ENCODE measurements at regions of chr3 and their contacts with region 1.

Region 1: DNA sequence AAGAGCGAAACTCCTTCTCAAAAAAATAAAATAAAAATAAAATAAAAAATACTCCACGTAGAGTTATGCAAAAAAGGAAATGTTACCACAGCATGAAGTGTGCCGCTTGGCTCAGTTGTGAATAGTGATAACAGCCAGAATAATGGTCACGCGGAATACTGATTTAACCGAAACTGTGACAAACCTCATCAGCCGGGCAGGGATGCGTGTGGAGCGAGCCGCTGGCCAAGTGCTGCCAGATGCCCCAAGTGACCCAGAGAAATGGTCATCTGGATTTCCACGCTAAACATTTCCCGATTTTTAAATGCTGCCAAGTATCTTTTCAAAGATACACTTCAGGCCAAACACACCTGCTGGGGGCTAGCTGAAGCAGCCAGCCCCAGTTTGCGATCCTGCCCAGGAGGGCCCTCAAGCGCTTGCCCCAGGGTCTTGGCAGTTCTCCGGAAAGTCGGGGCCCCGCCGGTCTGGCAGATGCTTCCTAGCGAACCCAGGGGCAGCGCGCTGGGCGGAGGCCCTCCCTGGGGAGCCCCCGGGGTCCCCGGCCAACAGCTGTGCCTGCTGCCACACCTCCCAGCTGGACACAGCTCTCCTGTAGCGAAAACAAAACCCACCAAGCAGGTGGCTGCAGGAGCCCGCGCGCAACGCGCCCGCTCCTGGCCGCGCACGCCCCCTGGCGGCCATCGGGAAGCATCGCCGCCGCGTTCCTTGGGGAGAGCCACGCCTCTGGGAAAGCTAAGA is 35.1 kb downstream of the CMTM6 start:
- DNase-seq: peak; percentile 79
- H3K4me3 Mint-ChIP-seq: no peak overlapping the region
- H3K27ac Mint-ChIP-seq: no peak overlapping the region
- H3K4me1 Mint-ChIP-seq: peaks cover 25% of the 10 kb centered on the region
- H3K27me3 Mint-ChIP-seq: no peaks in the 10 kb centered on the region
- CTCF ChIP-seq: peak; percentile 96

Region 2: GRCh38 chr3:32296256-32297204 is 171.0 kb before region 1 on chr3:
- CTCF ChIA-PET with region 1: interaction called, 17 read pairs
- POLR2A ChIA-PET with region 1: no interaction called
- intact Hi-C with region 1: loop called (anchors 2 kb)
- DNase-seq: peak; percentile 70
- H3K4me3 Mint-ChIP-seq: no peak overlapping the region
- H3K27ac Mint-ChIP-seq: no peak overlapping the region
- H3K4me1 Mint-ChIP-seq: peaks cover 9% of the 10 kb centered on the region
- H3K27me3 Mint-ChIP-seq: no peaks in the 10 kb centered on the region
- CTCF ChIP-seq: peak; percentile 91

Region 3: GRCh38 chr3:32391643-32392535 is 75.6 kb before region 1 on chr3 and contains the start of gene CMTM7:
- CTCF ChIA-PET with region 1: interaction called, 17 read pairs
- POLR2A ChIA-PET with region 1: interaction called, 4 read pairs
- intact Hi-C with region 1: no loop called
- DNase-seq: peak; percentile 67
- H3K4me3 Mint-ChIP-seq: peak within 1 kb of the TSS; percentile 80
- H3K27ac Mint-ChIP-seq: peak within 1 kb of the TSS; percentile 20
- H3K4me1 Mint-ChIP-seq: peaks cover 6% of the 10 kb centered on the region
- H3K27me3 Mint-ChIP-seq: no peaks in the 10 kb centered on the region
- CTCF ChIP-seq: no peak
- total RNA-seq, gene CMTM7: 9.7 and 14.3 TPM in 2 replicates

Region 4: DNA sequence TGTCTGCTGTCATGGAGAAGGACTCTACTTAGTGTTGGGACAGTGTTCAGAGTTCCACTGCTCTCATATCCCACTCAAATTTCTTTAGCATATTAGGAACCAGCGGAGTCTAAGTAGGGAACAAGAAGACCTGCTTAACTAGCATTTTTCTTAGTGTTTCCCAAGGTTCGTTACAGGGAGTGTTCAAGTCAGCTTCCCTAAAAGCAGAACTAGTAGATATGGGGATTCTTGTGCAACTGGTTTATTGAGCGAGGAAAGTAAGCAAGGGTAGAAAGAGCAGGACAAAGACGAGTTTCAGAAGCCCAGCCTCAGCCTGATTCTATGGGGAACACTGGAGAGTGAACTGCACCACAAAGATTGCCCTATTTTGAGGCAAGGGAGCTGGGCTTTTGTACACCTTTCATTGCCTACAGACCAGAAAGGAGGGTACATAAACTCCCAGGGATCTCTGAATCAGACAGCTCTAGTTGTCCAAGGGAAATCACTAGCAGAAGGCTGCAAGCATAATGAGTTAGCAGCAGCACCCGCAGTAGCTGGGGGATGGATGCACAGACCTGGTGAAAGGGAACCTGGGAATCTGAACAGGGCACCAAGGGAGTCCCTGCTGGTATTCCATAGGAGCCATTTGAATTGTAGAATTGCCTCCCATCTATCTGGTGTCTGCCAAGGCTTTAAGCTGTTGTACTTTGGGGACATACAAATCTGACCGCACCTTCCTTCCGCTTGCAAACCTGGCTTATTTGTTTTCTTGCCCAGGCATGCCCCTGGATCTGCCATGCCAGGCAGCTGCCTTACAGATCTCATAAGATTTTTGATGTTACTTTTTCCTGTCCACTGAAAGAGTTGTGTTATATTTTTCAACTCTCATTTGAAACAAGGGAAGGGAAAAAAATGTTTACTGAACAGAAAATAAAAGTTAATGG is 60.8 kb before region 1 on chr3:
- CTCF ChIA-PET with region 1: interaction called, 17 read pairs
- POLR2A ChIA-PET with region 1: interaction called, 6 read pairs
- intact Hi-C with region 1: loop called (anchors 2 kb)
- DNase-seq: peak; percentile 77
- H3K4me3 Mint-ChIP-seq: no peak overlapping the region
- H3K27ac Mint-ChIP-seq: peak overlapping the region; percentile 95
- H3K4me1 Mint-ChIP-seq: peaks cover 25% of the 10 kb centered on the region
- H3K27me3 Mint-ChIP-seq: no peaks in the 10 kb centered on the region
- CTCF ChIP-seq: no peak

Region 5: GRCh38 chr3:32420126-32421038 is 47.1 kb before region 1 on chr3:
- CTCF ChIA-PET with region 1: interaction called, 38 read pairs
- POLR2A ChIA-PET with region 1: interaction called, 21 read pairs
- intact Hi-C with region 1: loop called (anchors 2 kb)
- DNase-seq: peak; percentile 60
- H3K4me3 Mint-ChIP-seq: no peak overlapping the region
- H3K27ac Mint-ChIP-seq: peak overlapping the region; percentile 10
- H3K4me1 Mint-ChIP-seq: peaks cover 28% of the 10 kb centered on the region
- H3K27me3 Mint-ChIP-seq: no peaks in the 10 kb centered on the region
- CTCF ChIP-seq: no peak

Region 6: GRCh38 chr3:32484436-32484835 is 16.9 kb after region 1 on chr3:
- CTCF ChIA-PET with region 1: interaction called, 22 read pairs
- POLR2A ChIA-PET with region 1: interaction called, 3 read pairs
- intact Hi-C with region 1: no loop called
- DNase-seq: no peak
- H3K4me3 Mint-ChIP-seq: no peak overlapping the region
- H3K27ac Mint-ChIP-seq: no peak overlapping the region
- H3K4me1 Mint-ChIP-seq: peaks cover 15% of the 10 kb centered on the region
- H3K27me3 Mint-ChIP-seq: no peaks in the 10 kb centered on the region
- CTCF ChIP-seq: no peak

Region 7: DNA sequence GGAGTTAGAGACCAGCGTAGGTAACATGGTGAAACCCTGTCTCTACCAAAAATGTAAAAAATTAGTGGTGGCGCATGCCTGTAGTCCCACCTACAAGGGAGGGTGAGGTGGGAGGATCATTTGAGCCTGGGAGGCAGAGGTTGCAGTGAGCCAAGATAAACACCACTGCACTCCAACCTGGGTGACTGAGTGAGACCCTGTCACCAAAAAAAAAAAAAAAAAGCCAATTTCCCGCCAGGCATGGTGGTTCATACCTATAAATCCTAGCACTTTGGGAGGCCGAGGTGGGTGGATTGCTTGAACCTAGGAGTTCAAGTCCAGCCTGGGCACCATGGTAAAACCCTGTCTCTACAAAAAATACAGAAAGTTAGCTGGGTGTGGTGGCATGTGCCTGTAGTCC is 224.3 kb after region 1 on chr3:
- CTCF ChIA-PET with region 1: no interaction called
- POLR2A ChIA-PET with region 1: no interaction called
- intact Hi-C with region 1: no loop called
- DNase-seq: no peak
- H3K4me3 Mint-ChIP-seq: no peak overlapping the region
- H3K27ac Mint-ChIP-seq: no peak overlapping the region
- H3K4me1 Mint-ChIP-seq: peaks cover 12% of the 10 kb centered on the region
- H3K27me3 Mint-ChIP-seq: no peaks in the 10 kb centered on the region
- CTCF ChIP-seq: no peak

Region 8: DNA sequence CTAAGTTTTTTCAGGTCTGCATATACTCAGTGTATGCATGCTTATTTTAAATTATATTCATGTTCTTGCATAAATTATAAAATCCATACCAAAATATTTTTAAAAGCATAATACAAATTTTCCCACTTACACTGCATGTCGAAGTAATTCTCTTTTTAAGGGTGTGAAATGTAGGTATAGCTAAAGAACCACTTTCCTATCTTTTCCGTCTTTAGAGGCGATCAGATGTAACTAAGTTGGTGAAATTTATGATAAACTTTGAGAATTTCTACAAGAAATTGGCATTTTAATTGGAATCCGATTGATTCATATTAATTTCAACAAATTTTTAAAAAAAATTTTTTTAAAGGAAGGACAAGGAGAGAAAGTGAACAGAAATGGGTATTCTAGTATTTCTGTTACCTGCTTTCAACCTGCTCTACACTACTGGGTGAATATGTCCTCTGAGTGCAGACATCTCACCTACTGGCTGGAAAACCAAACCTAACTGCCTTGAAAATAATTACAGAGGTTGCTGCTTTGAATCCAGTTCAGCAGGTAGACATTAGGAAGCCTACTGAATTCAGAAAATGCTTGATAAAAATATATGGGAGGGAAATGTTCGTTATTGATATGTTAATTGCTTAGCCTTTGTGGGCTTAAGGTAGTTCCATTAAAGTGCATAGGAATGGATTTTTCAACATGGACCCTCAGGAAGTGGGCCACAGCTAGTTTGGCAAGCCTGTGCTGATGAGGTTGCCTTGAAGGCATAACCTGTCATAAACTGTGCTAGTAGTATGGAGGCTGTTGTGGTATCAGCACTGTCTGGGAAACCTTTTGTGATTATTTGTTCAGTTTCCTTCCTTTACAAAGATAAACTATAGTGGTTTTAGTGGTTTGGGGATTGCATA is 355.4 kb after region 1 on chr3:
- CTCF ChIA-PET with region 1: no interaction called
- POLR2A ChIA-PET with region 1: no interaction called
- intact Hi-C with region 1: no loop called
- DNase-seq: no peak
- H3K4me3 Mint-ChIP-seq: no peak overlapping the region
- H3K27ac Mint-ChIP-seq: no peak overlapping the region
- H3K4me1 Mint-ChIP-seq: no peaks in the 10 kb centered on the region
- H3K27me3 Mint-ChIP-seq: no peaks in the 10 kb centered on the region
- CTCF ChIP-seq: no peak

Measured in MCF 10A (cell line).